CD4-positive, alpha-beta memory T cell (primary cell): ENCODE measurements at regions of chr6 and their contacts with region 1.

Region 1: DNA sequence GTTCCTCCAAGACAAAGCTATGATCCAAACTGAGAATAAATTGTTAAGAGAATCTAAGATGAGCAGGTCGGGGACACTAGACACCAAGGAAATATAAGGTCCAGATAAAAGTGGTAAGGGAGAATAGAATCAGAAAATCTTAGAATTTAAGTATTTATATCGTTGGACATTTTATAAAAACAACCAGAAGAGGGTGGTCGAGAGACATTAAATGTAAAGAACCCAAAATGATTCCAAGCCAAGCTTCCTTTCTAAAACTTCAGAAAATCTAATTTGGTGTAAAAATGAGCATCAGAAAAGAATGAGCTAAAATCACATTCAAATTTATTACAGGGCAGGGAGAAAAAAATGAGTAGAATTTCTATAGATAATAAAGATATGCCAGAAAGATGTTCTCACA is 97.8 kb upstream of the OGFRL1 start:
- DNase-seq: peak in 4 of 5 donors; percentile 13 to 18 (median 16)
- H3K4me3 ChIP-seq: no peak overlapping the region
- H3K4me3 Mint-ChIP-seq: no peak overlapping the region
- H3K27ac ChIP-seq: no peak overlapping the region
- H3K27ac Mint-ChIP-seq: no peak overlapping the region
- H3K4me1 ChIP-seq: no peaks in the 10 kb centered on the region
- H3K4me1 Mint-ChIP-seq: peaks cover 0 to 2% (median 0%) of the 10 kb centered on the region in 4 donors
- H3K27me3 ChIP-seq: no peaks in the 10 kb centered on the region
- H3K27me3 Mint-ChIP-seq: peaks cover 2 to 3% of the 10 kb centered on the region in 2 donors

Region 2: DNA sequence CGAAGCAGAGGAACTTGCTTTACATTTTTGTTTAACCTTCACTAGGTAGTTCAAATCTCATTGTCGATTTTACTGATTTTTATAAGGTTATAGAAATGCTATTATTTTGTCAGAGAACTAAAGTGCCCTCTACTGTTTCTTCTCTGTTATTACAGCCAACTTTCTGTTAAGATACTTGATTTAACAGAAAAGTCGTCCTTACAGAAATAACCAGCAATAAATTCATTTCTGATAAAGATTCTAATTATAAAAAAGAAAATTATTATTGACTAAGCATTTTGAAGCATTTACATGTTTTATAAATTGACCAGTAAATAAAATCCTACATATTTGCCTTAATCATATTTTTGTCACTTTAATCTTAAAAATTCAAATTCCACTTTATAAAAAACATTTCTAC is 158.6 kb after region 1 on chr6:
- CTCF ChIA-PET with region 1: interaction called, 57 read pairs
- POLR2A ChIA-PET with region 1: interaction called, 3 read pairs
- intact Hi-C with region 1: loop called (anchors 1 kb)
- DNase-seq: peak in 4 of 5 donors; percentile 16 to 38 (median 26)
- H3K4me3 ChIP-seq: no peak overlapping the region
- H3K4me3 Mint-ChIP-seq: no peak overlapping the region
- H3K27ac ChIP-seq: no peak overlapping the region
- H3K27ac Mint-ChIP-seq: no peak overlapping the region
- H3K4me1 ChIP-seq: no peaks in the 10 kb centered on the region
- H3K4me1 Mint-ChIP-seq: peaks cover 0 to 2% (median 0%) of the 10 kb centered on the region in 4 donors
- H3K27me3 ChIP-seq: no peaks in the 10 kb centered on the region
- H3K27me3 Mint-ChIP-seq: peaks cover 0 to 3% of the 10 kb centered on the region in 2 donors

Region 3: GRCh38 chr6:71544028-71544427 is 353.2 kb after region 1 on chr6:
- CTCF ChIA-PET with region 1: no interaction called
- POLR2A ChIA-PET with region 1: no interaction called
- intact Hi-C with region 1: no loop called
- DNase-seq: no peak
- H3K4me3 ChIP-seq: no peak overlapping the region
- H3K4me3 Mint-ChIP-seq: no peak overlapping the region
- H3K27ac ChIP-seq: no peak overlapping the region
- H3K27ac Mint-ChIP-seq: no peak overlapping the region
- H3K4me1 ChIP-seq: no peaks in the 10 kb centered on the region
- H3K4me1 Mint-ChIP-seq: no peaks in the 10 kb centered on the region
- H3K27me3 ChIP-seq: no peaks in the 10 kb centered on the region
- H3K27me3 Mint-ChIP-seq: no peaks in the 10 kb centered on the region